Prostate gland (tissue), 2 donors: ENCODE measurements at regions of chr7 and their contacts with region 1.

Region 1: DNA sequence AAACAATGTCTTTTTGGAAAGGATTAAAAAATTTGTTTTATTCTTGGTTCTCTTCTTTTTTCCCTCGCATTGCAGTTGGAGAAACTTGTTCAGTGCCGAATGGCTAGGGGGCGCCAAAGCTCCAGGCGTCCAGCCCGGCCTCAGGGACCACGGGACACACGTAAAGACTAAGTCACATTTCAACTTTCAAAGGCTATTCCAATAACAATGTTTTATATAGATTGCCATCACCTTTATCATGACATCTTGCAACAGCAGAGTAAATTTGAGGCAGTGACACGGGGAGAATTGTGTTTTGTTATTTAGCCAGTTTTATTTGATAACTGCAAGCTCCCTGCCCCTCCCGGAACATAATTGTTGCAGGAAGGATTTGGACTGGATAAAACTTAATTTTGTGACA is 2.2 kb upstream of the IGFBP3 start:
- DNase-seq: peak; percentile 60
- H3K4me3 ChIP-seq: no peak overlapping the region
- H3K27ac ChIP-seq: no peak overlapping the region
- H3K4me1 ChIP-seq: no peaks in the 10 kb centered on the region
- H3K27me3 ChIP-seq: peaks cover 2% of the 10 kb centered on the region
- CTCF ChIP-seq: peak; percentile 63 to 91 (median 84)
- POLR2A ChIP-seq: no peak

Region 2: GRCh38 chr7:45993621-45994020 is 70.3 kb after region 1 on chr7:
- intact Hi-C with region 1: no loop called
- DNase-seq: no peak
- H3K4me3 ChIP-seq: no peak overlapping the region
- H3K27ac ChIP-seq: no peak overlapping the region
- H3K4me1 ChIP-seq: no peaks in the 10 kb centered on the region
- H3K27me3 ChIP-seq: no peaks in the 10 kb centered on the region
- CTCF ChIP-seq: no peak
- POLR2A ChIP-seq: no peak

Region 3: GRCh38 chr7:46352004-46352954 is 429.0 kb after region 1 on chr7:
- intact Hi-C with region 1: loop called (anchors 5 kb)
- DNase-seq: peak; percentile 21
- H3K4me3 ChIP-seq: no peak overlapping the region
- H3K27ac ChIP-seq: no peak overlapping the region
- H3K4me1 ChIP-seq: no peaks in the 10 kb centered on the region
- H3K27me3 ChIP-seq: no peaks in the 10 kb centered on the region
- CTCF ChIP-seq: peak in 3 of 4 experiments; percentile 47 to 76 (median 61)
- POLR2A ChIP-seq: no peak

Region 4: GRCh38 chr7:46558482-46559193 is 635.3 kb after region 1 on chr7:
- intact Hi-C with region 1: loop called (anchors 5 kb)
- DNase-seq: no peak
- H3K4me3 ChIP-seq: no peak overlapping the region
- H3K27ac ChIP-seq: no peak overlapping the region
- H3K4me1 ChIP-seq: no peaks in the 10 kb centered on the region
- H3K27me3 ChIP-seq: no peaks in the 10 kb centered on the region
- CTCF ChIP-seq: no peak
- POLR2A ChIP-seq: no peak

Region 5: GRCh38 chr7:46603780-46604179 is 680.5 kb after region 1 on chr7:
- intact Hi-C with region 1: loop called (anchors 10 kb)
- DNase-seq: peak; percentile 53
- H3K4me3 ChIP-seq: no peak overlapping the region
- H3K27ac ChIP-seq: peak overlapping the region; percentile 28 to 33
- H3K4me1 ChIP-seq: no peaks in the 10 kb centered on the region
- H3K27me3 ChIP-seq: no peaks in the 10 kb centered on the region
- CTCF ChIP-seq: no peak
- POLR2A ChIP-seq: no peak

Region 6: GRCh38 chr7:46745707-46746090 is 822.4 kb after region 1 on chr7:
- intact Hi-C with region 1: loop called (anchors 10 kb)
- DNase-seq: no peak
- H3K4me3 ChIP-seq: no peak overlapping the region
- H3K27ac ChIP-seq: no peak overlapping the region
- H3K4me1 ChIP-seq: no peaks in the 10 kb centered on the region
- H3K27me3 ChIP-seq: no peaks in the 10 kb centered on the region
- CTCF ChIP-seq: no peak
- POLR2A ChIP-seq: no peak

Region 7: DNA sequence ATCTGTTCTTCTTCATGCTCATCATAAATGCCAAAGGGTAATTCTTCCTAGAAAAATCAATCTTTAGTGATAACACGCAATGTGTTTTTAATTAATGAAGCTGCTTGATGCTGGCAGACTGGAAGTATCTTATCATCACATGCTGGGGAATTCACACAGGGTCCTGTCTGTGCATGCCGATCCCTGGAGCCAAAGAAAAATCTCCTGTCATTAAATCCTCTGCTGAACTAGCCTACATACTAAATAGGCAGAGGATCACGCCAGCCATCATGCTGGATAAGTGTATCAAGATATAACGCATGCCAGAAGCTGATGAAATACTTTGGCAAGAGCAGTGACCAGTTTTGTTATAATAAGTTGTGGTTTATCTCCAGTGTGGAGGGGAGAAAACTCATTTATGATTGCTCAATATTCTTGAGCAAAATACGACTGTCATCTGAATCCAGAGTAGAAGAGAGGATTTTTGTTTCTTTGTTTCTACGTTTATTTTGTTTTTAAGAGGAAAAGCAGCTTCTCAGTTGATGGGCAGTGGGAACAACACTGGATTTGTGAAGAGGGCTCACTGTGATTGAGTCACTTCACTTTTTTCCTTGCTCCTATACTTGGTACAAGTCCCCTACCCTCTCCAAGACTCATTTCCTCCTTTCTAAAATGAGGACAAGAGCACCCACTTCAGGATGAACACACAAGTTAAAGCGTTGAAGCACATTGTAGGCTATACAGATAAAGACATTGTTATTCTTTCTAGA is 1009.6 kb after region 1 on chr7:
- intact Hi-C with region 1: loop called (anchors 5 kb)
- DNase-seq: peak; percentile 84
- H3K4me3 ChIP-seq: no peak overlapping the region
- H3K27ac ChIP-seq: peak overlapping the region; percentile 5 to 17
- H3K4me1 ChIP-seq: no peaks in the 10 kb centered on the region
- H3K27me3 ChIP-seq: no peaks in the 10 kb centered on the region
- CTCF ChIP-seq: no peak
- POLR2A ChIP-seq: no peak